Activated CD4-positive, alpha-beta memory T cell treated with anti-CD3 and anti-CD28 coated beads, Interleukin-2, amount 10 ng/mL, durations not matched to agents 7 days and 5 days (primary cell): ENCODE measurements at regions of chr11 and their contacts with region 1.

Region 1: DNA sequence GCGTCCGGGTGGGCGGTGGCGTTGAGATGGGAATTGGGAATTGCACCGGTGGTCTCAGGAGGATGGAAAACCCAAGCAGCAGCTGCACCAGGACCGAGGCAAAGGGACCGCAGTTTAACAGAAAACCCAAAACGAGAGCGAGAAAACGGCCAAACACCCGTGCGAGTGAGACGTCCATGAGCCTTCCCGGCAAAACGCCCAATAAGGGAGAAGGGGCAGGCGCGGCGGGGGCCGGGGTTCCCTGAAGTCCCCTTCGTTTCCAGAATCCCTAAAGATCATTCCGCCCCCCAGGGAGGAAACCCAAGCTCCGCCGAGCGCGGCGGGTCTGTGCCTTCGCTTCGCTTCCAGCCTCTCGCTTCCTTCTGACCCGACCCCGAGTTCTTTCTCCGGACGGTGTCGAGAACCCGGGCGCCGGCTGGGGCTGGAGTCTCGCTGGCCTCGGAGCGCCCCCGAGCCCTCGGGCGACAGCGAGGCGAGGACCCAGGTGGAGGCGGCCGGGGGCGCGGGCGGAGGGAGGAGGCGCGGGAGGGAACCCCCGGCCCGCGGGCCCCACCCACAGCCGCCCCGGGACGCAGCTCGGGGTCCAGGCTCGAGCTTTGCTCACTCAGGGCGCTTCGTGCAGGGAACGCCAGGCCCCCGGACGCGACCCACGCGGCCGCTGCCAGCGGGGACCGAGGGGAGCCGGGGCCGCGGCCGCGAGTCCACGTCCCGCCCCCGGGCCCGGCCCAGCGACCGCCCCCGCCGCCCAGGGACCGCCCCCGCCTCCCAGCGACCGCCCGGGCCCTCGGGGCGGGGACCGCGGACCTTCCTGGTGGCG is at the start of gene PGGHG:
- DNase-seq: peak; percentile 71
- H3K4me3 Mint-ChIP-seq: peak within 1 kb of the TSS; percentile 95
- H3K27ac Mint-ChIP-seq: peak within 1 kb of the TSS; percentile 80
- H3K4me1 Mint-ChIP-seq: peaks cover 35% of the 10 kb centered on the region
- H3K27me3 Mint-ChIP-seq: peaks cover 10% of the 10 kb centered on the region
- total RNA-seq, gene PGGHG: 113 to 117 TPM

Region 2: GRCh38 chr11:324156-324555 is 35.6 kb after region 1 on chr11:
- CTCF ChIA-PET with region 1: no interaction called
- POLR2A ChIA-PET with region 1: no interaction called
- DNase-seq: no peak
- H3K4me3 Mint-ChIP-seq: no peak overlapping the region
- H3K27ac Mint-ChIP-seq: no peak overlapping the region
- H3K4me1 Mint-ChIP-seq: peaks cover 49% of the 10 kb centered on the region
- H3K27me3 Mint-ChIP-seq: peaks cover 4% of the 10 kb centered on the region

Region 3: DNA sequence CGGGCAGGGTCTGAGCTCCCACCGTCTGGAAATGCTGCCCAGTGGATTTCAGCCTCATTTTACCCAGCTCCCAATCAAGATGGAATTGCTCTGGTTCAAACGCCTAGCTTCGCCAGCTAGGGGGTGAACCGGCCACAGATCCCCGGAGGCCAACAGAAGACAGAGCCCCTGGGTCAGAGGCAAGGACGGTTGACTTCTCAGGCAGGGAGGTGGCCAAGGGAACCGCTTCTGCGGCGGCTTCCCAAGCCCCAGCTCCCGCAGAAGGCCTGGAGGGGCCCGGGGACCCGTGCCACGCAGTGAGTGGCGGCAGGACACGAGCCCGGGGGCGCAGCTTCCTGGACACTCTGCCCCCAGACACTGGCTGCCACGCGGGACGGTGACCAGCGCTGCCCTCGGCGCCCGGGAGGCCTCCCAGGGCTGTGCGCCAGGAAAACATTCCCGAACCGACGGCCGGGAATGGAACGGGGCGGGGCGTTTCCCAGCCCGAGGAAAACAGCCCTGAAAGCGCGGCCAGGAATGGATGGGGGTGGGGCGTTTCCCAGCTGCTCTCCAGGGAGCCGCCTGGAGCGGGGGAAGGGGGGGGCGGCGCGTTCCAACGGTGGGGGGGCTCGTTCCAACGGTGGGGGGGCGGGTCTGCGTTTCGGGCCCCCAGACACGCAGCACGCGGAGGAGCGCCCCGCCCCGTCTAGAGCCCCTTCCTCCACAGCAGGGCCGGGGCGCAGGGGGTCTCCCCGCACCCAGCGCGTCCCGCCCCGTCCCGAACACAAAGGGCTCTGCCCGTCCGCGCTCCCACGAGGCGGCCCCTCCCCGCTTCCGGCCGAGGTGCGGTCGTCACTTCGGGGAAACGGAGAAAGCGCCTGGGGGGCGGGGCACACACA is 67.3 kb after region 1 on chr11:
- CTCF ChIA-PET with region 1: no interaction called
- POLR2A ChIA-PET with region 1: interaction called, 13 read pairs
- DNase-seq: peak; percentile 89
- H3K4me3 Mint-ChIP-seq: peak overlapping the region; percentile 88
- H3K27ac Mint-ChIP-seq: peak overlapping the region; percentile 95
- H3K4me1 Mint-ChIP-seq: peaks cover 41% of the 10 kb centered on the region
- H3K27me3 Mint-ChIP-seq: peaks cover 12% of the 10 kb centered on the region

Region 4: DNA sequence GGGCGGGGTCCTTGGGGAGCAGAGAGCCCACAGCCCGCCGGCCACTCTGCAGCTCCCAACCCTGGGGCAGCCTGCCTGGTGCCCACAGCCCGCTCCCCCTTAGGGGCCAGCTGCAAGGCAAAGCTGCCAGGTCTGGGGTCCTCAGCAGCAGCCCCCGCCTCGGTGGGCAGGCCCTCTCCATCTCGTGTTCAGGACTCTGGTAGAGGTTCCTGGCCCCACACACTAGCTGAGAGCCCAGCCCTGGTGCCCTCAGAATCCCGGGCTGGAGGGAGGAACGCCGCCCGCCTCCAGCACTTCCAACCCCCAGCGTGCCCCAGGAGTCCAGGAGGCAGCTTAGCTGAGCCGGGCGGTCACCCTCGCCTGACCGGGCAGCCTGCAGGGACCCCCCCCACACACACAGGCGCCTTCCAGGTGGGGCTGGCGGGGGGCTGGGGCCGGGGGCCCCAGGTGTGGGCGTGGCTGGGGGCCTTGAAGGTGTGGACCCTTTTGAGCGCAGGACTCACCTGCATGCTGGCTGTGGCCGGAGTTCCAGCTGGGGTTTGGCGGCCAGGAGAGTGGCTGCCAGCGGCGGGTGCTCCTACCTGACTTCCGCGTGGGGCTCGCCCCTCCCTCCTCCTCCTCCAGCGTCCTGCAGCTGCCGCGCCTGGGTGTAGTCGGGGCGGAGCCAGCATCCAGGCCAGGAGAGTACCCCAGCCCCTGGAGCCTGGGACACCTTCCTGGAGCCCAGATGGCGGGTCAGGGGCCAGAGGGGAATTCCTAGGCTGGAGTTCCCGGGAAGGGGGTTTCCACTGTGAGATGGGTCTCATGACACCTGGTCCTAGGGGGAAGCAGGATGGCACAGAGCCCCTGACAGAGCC is 153.1 kb after region 1 on chr11 and contains the start of gene ANO9:
- CTCF ChIA-PET with region 1: no interaction called
- POLR2A ChIA-PET with region 1: no interaction called
- DNase-seq: peak; percentile 74
- H3K4me3 Mint-ChIP-seq: peak within 1 kb of the TSS; percentile 75
- H3K27ac Mint-ChIP-seq: no peak within 1 kb of the TSS
- H3K4me1 Mint-ChIP-seq: peaks cover 35% of the 10 kb centered on the region
- H3K27me3 Mint-ChIP-seq: peaks cover 9% of the 10 kb centered on the region
- total RNA-seq, gene ANO9: 69.2 to 73.5 TPM

Region 5: GRCh38 chr11:575996-576768 is 287.6 kb after region 1 on chr11 and contains the start of gene PHRF1:
- CTCF ChIA-PET with region 1: no interaction called
- POLR2A ChIA-PET with region 1: no interaction called
- DNase-seq: peak; percentile 95
- H3K4me3 Mint-ChIP-seq: peak within 1 kb of the TSS; percentile 91
- H3K27ac Mint-ChIP-seq: peak within 1 kb of the TSS; percentile 95
- H3K4me1 Mint-ChIP-seq: peaks cover 44% of the 10 kb centered on the region
- H3K27me3 Mint-ChIP-seq: peaks cover 13% of the 10 kb centered on the region
- total RNA-seq, gene PHRF1: 38.7 to 39.1 TPM